ENCODE measurements at regions of chr7 and their contacts with region 1.

Region 1: GRCh38 chr7:31744294-31744874 is 57.4 kb downstream of the PPP1R17 start:
- DNase-seq: peak; percentile 79
- H3K4me3 ChIP-seq: no peak overlapping the region
- H3K27ac ChIP-seq: no peak overlapping the region
- H3K4me1 ChIP-seq: no peaks in the 10 kb centered on the region
- H3K27me3 ChIP-seq: peaks cover 3 to 5% of the 10 kb centered on the region in 2 experiments
- CTCF ChIP-seq: peak; percentile 63 to 71
- POLR2A ChIP-seq: no peak

Region 2: DNA sequence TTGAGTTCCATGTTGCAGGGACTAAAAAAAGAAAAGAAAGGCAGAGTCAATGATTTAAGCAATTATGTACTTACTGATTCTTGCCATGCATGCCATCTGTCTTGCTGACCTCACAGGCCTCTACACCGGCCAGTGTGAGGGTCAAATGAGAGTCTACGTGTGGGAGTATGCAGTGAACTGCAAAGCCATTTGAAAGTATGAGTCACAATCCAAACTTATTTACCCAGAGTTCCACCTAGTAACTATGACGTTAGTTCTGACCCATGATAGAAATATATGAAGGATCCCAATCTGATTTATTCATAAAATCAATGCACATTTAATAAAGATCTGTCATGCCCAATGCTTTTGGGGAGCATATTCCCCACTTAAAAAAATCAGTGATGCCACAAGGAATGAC is 299.3 kb after region 1 on chr7:
- CTCF ChIA-PET with region 1: no interaction called
- POLR2A ChIA-PET with region 1: no interaction called
- dilution Hi-C with region 1: no loop called
- intact Hi-C with region 1: loop called (anchors 2 kb)
- DNase-seq: no peak
- H3K4me3 ChIP-seq: no peak overlapping the region
- H3K27ac ChIP-seq: no peak overlapping the region
- H3K4me1 ChIP-seq: no peaks in the 10 kb centered on the region
- H3K27me3 ChIP-seq: peaks cover 0 to 2% of the 10 kb centered on the region in 2 experiments
- CTCF ChIP-seq: no peak
- POLR2A ChIP-seq: no peak

Region 3: DNA sequence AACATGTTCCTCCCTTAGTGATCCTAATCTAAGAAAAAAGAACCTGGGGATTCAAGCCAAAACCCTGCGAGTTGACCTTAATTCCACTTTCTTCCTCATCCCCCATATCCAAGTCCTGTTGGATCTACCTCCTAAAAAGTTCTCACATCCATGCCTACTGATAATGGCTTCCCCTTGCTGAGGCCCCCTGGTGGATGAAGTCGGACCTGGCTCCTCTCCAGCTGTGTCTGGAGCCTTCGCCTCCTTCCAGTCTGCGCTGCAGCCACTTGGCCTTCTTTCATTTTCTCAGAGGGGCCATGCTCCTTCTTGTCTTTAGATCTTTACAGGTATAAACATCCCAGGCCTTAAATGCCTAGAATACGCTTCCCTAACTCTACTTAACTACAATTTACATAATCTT is 317.8 kb after region 1 on chr7:
- CTCF ChIA-PET with region 1: interaction called, 11 read pairs
- POLR2A ChIA-PET with region 1: no interaction called
- dilution Hi-C with region 1: no loop called
- intact Hi-C with region 1: loop called (anchors 1 kb)
- DNase-seq: peak; percentile 48
- H3K4me3 ChIP-seq: no peak overlapping the region
- H3K27ac ChIP-seq: no peak overlapping the region
- H3K4me1 ChIP-seq: no peaks in the 10 kb centered on the region
- H3K27me3 ChIP-seq: peaks cover 0 to 8% of the 10 kb centered on the region in 2 experiments
- CTCF ChIP-seq: peak; percentile 64 to 66
- POLR2A ChIP-seq: no peak

Region 4: GRCh38 chr7:32479574-32480200 is 735.3 kb after region 1 on chr7:
- CTCF ChIA-PET with region 1: interaction called, 7 read pairs
- POLR2A ChIA-PET with region 1: no interaction called
- dilution Hi-C with region 1: no loop called
- intact Hi-C with region 1: loop called (anchors 1 kb)
- DNase-seq: peak; percentile 44
- H3K4me3 ChIP-seq: no peak overlapping the region
- H3K27ac ChIP-seq: no peak overlapping the region
- H3K4me1 ChIP-seq: peaks cover 6% of the 10 kb centered on the region
- H3K27me3 ChIP-seq: peaks cover 0 to 3% of the 10 kb centered on the region in 2 experiments
- CTCF ChIP-seq: peak; percentile 77 to 80
- POLR2A ChIP-seq: no peak